ENCODE measurements at regions of chr17 and their contacts with region 1.

Region 1: GRCh38 chr17:4004517-4005295 is 40.5 kb upstream of the ATP2A3 start:
- DNase-seq: peak in 3 of 7 donors; percentile 55 to 62 (median 59)
- H3K4me3 ChIP-seq: no peak overlapping the region
- H3K27ac ChIP-seq: no peak overlapping the region
- H3K4me1 ChIP-seq: peaks cover 0 to 8% of the 10 kb centered on the region in 2 donors
- H3K27me3 ChIP-seq: peaks cover 3% of the 10 kb centered on the region
- CTCF ChIP-seq: peak; percentile 78 to 94 (median 88)
- POLR2A ChIP-seq: no peak

Region 2: GRCh38 chr17:3913531-3914311 is 91.0 kb before region 1 on chr17:
- intact Hi-C with region 1: loop called (anchors 5 kb)
- DNase-seq: peak; percentile 75 to 94 (median 85)
- H3K4me3 ChIP-seq: no peak overlapping the region
- H3K27ac ChIP-seq: peak overlapping the region in 1 of 5 donors; percentile 16
- H3K4me1 ChIP-seq: peaks cover 14 to 22% of the 10 kb centered on the region in 2 donors
- H3K27me3 ChIP-seq: no peaks in the 10 kb centered on the region
- CTCF ChIP-seq: peak; percentile 91 to 98 (median 95)
- POLR2A ChIP-seq: no peak

Region 3: DNA sequence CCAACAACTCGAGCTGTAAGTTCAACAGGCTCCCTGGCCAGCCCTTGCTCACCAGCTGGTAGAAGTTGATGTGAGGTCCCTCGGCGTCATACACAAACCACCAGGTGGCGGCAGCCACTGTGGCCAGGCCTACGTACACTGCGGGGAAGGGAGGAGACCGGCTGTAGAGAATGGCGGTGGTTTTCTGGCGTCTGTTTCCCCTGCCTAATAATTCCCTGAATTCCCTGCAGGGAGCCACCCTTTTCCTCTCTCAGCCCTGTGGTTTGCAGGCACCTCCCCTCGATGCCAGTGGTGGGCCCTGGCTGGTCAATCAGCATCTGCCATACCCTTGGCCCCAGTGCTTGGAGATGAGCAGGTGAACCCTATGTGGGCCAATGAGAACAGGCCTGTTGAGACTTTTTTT is 69.6 kb before region 1 on chr17:
- intact Hi-C with region 1: loop called in 1 of 2 experiments (anchors 2 kb)
- DNase-seq: peak; percentile 74 to 91 (median 85)
- H3K4me3 ChIP-seq: no peak overlapping the region
- H3K27ac ChIP-seq: no peak overlapping the region
- H3K4me1 ChIP-seq: no peaks in the 10 kb centered on the region
- H3K27me3 ChIP-seq: no peaks in the 10 kb centered on the region
- CTCF ChIP-seq: peak; percentile 57 to 81 (median 73)
- POLR2A ChIP-seq: no peak

Region 4: DNA sequence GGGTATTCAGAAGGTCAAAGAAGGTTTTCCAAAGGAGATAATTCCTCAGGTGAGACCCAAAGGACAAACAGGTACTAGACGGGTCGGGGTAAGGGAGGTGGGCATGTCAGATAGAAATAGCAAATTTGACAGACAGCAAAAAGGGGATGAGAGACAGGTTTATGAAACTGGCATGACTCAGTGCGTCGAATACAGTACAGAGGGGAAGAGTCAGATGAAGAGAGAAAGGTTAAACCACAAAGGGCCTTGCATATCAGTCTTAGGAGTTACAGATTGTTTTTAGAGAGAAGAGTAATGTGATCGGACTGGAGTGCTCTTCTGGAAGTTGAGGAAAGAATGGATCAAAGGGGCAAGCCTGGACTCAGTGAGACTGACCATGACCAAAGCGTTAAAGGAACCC is 49.7 kb after region 1 on chr17:
- intact Hi-C with region 1: no loop called
- DNase-seq: no peak
- H3K4me3 ChIP-seq: no peak overlapping the region
- H3K27ac ChIP-seq: no peak overlapping the region
- H3K4me1 ChIP-seq: peaks cover 7 to 12% of the 10 kb centered on the region in 2 donors
- H3K27me3 ChIP-seq: no peaks in the 10 kb centered on the region
- CTCF ChIP-seq: no peak
- POLR2A ChIP-seq: no peak